Activated B cell treated with CpG ODN at 0.5 μM for 24 hours (primary cell): ENCODE measurements at regions of chr10 and their contacts with region 1.

Region 1: DNA sequence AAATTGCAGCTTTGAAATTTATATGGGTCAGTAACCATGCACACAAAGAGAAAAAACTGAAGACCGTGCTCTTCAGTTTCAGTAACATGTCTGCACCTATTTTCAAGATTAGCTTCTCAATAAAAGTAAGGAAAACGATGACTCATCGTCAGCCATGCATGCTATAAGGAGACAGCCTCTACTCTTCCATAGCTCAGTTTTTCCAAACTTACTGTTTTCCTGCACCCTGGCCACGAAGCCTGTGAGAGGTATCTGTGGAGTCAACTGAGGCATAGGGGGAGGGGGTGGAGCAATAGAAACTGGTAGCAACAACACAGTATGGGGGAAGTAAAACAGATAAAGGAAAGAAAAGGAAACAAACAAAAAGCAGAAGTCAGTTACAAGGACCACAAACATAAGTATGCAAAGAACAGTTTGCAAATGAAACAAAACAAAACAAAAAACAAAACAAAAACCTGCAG is 58.0 kb downstream of the PDSS1 start:
- DNase-seq: no peak
- ATAC-seq: peak; percentile 75
- H3K4me3 Mint-ChIP-seq: peak overlapping the region; percentile 59
- H3K27ac Mint-ChIP-seq: peak overlapping the region; percentile 68
- H3K4me1 Mint-ChIP-seq: peaks cover 25% of the 10 kb centered on the region
- H3K27me3 Mint-ChIP-seq: no peaks in the 10 kb centered on the region
- CTCF ChIP-seq: no peak

Region 2: GRCh38 chr10:26743091-26743490 is 12.4 kb before region 1 on chr10:
- CTCF ChIA-PET with region 1: interaction called, 3 read pairs
- POLR2A ChIA-PET with region 1: interaction called, 4 read pairs
- intact Hi-C with region 1: loop called (anchors 1 kb)
- DNase-seq: no peak
- ATAC-seq: no peak
- H3K4me3 Mint-ChIP-seq: no peak overlapping the region
- H3K27ac Mint-ChIP-seq: peak overlapping the region; percentile 81
- H3K4me1 Mint-ChIP-seq: peaks cover 57% of the 10 kb centered on the region
- H3K27me3 Mint-ChIP-seq: no peaks in the 10 kb centered on the region
- CTCF ChIP-seq: no peak

Region 3: DNA sequence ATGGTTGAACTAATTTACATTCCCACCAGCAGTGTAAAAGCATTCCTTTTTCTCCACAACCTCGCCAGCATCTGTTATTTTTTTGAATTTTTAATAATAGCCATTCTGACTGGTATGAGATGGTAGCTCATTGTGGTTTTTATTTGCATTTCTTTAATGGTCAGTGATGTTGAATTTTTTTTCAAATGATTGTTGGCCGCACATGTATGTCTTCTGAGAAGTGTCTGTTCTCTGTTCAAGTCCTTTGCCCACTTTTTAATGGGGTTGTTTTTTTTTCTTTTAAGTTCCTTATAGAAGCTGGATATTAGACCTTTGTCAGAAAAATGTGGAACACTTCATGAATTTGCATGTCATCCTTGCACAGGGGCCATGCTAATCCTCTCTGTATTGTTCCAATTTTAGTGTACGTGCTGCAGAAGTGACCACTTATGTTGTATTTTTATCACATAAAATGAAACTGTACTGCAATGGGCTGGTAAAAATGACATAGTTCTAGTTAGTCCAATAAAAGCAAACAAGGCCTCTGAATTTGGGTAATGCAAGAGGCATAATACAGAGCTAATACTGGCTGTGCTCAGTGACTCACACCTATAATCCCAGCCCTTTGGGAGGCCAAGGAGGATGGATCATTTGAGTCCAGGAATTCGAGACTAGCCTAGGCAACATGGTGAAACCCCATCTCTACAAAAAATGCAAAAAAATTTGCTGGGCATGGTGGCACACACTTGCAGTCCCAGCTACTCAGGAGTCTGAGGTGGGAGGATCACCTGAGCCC is 34.9 kb after region 1 on chr10:
- CTCF ChIA-PET with region 1: no interaction called
- POLR2A ChIA-PET with region 1: no interaction called
- intact Hi-C with region 1: loop called (anchors 5 kb)
- DNase-seq: no peak
- ATAC-seq: no peak
- H3K4me3 Mint-ChIP-seq: no peak overlapping the region
- H3K27ac Mint-ChIP-seq: no peak overlapping the region
- H3K4me1 Mint-ChIP-seq: peaks cover 66% of the 10 kb centered on the region
- H3K27me3 Mint-ChIP-seq: no peaks in the 10 kb centered on the region
- CTCF ChIP-seq: no peak

Region 4: DNA sequence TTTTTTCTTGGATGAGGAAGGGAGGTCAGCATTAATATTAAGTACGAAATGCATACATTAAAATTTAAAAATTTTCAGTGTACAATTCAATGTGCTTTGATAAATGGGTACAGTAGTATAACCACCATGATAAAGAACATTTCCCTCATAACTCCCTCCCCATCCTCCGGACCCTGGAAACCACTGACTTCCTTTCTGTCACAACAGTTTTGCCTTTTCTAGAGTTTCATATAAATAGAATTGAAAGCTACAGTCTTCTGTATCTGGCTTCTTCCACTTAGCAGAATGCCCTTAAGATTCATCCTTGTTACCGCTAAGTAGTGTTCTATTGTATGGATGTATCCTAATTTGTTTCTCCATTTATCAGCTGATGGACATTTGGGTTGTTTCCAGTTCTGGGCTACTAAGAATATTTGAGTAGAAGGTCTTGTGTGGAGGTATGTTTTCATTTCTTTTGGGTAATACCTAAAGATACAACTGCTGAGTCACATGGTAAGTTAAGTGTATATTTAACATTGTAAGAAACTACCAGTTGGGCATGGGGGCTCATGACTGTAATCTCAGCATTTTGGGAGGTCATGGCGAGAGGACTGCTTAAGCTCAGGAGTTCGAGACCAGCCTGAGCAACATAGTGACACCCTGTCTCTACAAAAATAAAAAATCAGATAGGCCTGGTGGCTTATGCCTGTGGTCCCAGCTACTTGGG is 74.5 kb after region 1 on chr10:
- CTCF ChIA-PET with region 1: no interaction called
- POLR2A ChIA-PET with region 1: no interaction called
- intact Hi-C with region 1: no loop called
- DNase-seq: no peak
- ATAC-seq: no peak
- H3K4me3 Mint-ChIP-seq: peak overlapping the region; percentile 2
- H3K27ac Mint-ChIP-seq: peak overlapping the region; percentile 19
- H3K4me1 Mint-ChIP-seq: peaks cover 71% of the 10 kb centered on the region
- H3K27me3 Mint-ChIP-seq: no peaks in the 10 kb centered on the region
- CTCF ChIP-seq: no peak